ENCODE measurements at regions of chr12 and their contacts with region 1.

Region 1: GRCh38 chr12:127677537-127678131 is 589.3 kb upstream of the TMEM132C start:
- DNase-seq: peak; percentile 36
- H3K4me3 ChIP-seq: no peak overlapping the region
- H3K27ac ChIP-seq: no peak overlapping the region
- H3K4me1 ChIP-seq: no peaks in the 10 kb centered on the region
- H3K27me3 ChIP-seq: no peaks in the 10 kb centered on the region
- CTCF ChIP-seq: peak; percentile 31 to 60 (median 51)
- POLR2A ChIP-seq: no peak

Region 2: GRCh38 chr12:127903146-127903545 is 225.5 kb after region 1 on chr12:
- intact Hi-C with region 1: no loop called
- DNase-seq: no peak
- H3K4me3 ChIP-seq: no peak overlapping the region
- H3K27ac ChIP-seq: no peak overlapping the region
- H3K4me1 ChIP-seq: no peaks in the 10 kb centered on the region
- H3K27me3 ChIP-seq: no peaks in the 10 kb centered on the region
- CTCF ChIP-seq: no peak
- POLR2A ChIP-seq: no peak

Region 3: GRCh38 chr12:127925971-127926370 is 248.3 kb after region 1 on chr12:
- intact Hi-C with region 1: loop called (anchors 10 kb)
- DNase-seq: no peak
- H3K4me3 ChIP-seq: no peak overlapping the region
- H3K27ac ChIP-seq: no peak overlapping the region
- H3K4me1 ChIP-seq: no peaks in the 10 kb centered on the region
- H3K27me3 ChIP-seq: no peaks in the 10 kb centered on the region
- CTCF ChIP-seq: peak in 2 of 4 experiments; percentile 41 to 44
- POLR2A ChIP-seq: no peak

Measured in prostate gland (tissue), 2 donors.